CD4-positive, alpha-beta memory T cell (primary cell): ENCODE measurements at regions of chr22 and their contacts with region 1.

Region 1: GRCh38 chr22:41957941-41958556 is 6.1 kb downstream of the SMIM45 start:
- DNase-seq: no peak
- H3K4me3 ChIP-seq: no peak overlapping the region
- H3K4me3 Mint-ChIP-seq: no peak overlapping the region
- H3K27ac ChIP-seq: no peak overlapping the region
- H3K27ac Mint-ChIP-seq: peak overlapping the region in 1 of 7 donors; percentile 69
- H3K4me1 ChIP-seq: no peaks in the 10 kb centered on the region
- H3K4me1 Mint-ChIP-seq: peaks cover 3 to 5% (median 4%) of the 10 kb centered on the region in 4 donors
- H3K27me3 ChIP-seq: no peaks in the 10 kb centered on the region
- H3K27me3 Mint-ChIP-seq: peaks cover 0 to 1% of the 10 kb centered on the region in 2 donors

Region 2: DNA sequence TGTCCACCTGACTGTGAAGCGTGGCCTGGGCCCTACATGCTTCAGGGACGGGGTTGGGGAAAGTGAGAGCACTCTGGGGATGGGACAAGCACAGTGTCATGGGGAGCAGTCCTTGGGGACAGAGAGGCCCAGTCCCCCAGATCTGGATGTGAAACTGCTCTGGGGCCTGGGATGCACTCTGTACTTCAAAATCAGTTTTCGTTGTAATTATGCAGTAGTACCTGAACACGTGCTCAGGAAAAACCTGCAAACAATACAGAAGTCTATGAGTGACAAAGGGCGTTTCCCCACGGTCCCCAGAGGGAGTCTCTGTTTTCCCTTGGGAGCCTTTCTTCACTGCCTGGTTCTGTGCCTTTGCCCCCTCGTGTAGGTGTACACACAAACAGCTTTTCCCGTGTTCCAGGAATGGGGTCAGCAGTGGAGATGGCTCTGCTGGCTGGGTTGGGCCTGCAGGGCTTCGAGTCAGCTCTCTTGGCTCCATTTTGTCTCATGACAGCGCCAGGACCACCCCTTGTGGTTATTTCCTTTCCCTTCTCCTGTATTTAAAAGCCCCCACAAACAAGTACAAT is 26.3 kb before region 1 on chr22:
- CTCF ChIA-PET with region 1: interaction called, 3 read pairs
- POLR2A ChIA-PET with region 1: no interaction called
- intact Hi-C with region 1: loop called (anchors 2 kb)
- DNase-seq: no peak
- H3K4me3 ChIP-seq: no peak overlapping the region
- H3K4me3 Mint-ChIP-seq: no peak overlapping the region
- H3K27ac ChIP-seq: no peak overlapping the region
- H3K27ac Mint-ChIP-seq: peak overlapping the region in 1 of 7 donors; percentile 68
- H3K4me1 ChIP-seq: peaks cover 7% of the 10 kb centered on the region
- H3K4me1 Mint-ChIP-seq: peaks cover 2 to 22% (median 5%) of the 10 kb centered on the region in 4 donors
- H3K27me3 ChIP-seq: no peaks in the 10 kb centered on the region
- H3K27me3 Mint-ChIP-seq: no peaks in the 10 kb centered on the region

Region 3: DNA sequence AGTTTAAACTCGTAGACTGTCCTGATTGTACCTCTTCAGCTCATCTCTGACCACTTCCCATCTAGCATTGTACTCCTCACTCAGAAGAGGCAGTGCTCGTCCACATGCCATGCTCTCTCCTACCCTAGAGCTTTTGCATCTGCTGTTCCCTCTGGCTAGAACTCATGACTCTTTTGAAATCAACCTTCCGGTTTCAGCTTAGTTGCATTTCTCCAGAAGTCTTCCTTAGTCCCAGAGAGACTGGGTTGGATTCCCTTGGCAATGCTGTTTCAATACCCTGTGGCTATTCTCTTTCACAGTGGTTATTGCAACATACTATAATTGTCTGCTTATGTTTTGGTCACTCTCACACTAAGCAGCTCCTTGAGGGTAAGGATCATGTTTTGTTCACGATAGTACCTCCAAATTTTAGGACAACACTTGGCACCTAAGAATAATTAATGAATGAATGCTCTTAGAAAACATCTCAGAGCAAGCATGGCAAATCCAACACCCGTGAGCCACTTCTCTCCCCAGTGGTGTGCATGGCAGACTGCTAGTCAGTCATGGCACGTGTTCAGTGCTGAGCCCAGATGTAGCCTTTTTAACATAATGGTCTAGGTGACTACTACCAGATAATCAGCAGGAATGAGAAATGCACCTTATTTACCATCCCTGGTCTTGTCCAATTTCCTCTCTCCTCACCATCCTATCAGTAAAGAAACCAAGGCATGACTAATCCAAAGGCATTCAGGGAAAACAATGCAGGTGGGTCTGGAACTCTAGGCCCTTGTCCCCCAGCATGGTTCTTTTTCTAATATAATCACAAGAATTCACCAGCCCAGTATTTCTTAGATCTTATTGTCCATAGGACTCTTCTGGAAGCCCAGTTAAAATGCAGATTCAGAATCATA is 25.7 kb after region 1 on chr22:
- CTCF ChIA-PET with region 1: no interaction called
- POLR2A ChIA-PET with region 1: no interaction called
- intact Hi-C with region 1: no loop called
- DNase-seq: no peak
- H3K4me3 ChIP-seq: no peak overlapping the region
- H3K4me3 Mint-ChIP-seq: no peak overlapping the region
- H3K27ac ChIP-seq: no peak overlapping the region
- H3K27ac Mint-ChIP-seq: no peak overlapping the region
- H3K4me1 ChIP-seq: no peaks in the 10 kb centered on the region
- H3K4me1 Mint-ChIP-seq: no peaks in the 10 kb centered on the region
- H3K27me3 ChIP-seq: no peaks in the 10 kb centered on the region
- H3K27me3 Mint-ChIP-seq: no peaks in the 10 kb centered on the region

Region 4: GRCh38 chr22:42437488-42438292 is 479.6 kb after region 1 on chr22:
- CTCF ChIA-PET with region 1: interaction called, 6 read pairs
- POLR2A ChIA-PET with region 1: no interaction called
- intact Hi-C with region 1: loop called (anchors 2 kb)
- DNase-seq: peak; percentile 80 to 86 (median 81)
- H3K4me3 ChIP-seq: peak overlapping the region; percentile 48 to 79
- H3K4me3 Mint-ChIP-seq: peak overlapping the region; percentile 77 to 91 (median 84)
- H3K27ac ChIP-seq: peak overlapping the region; percentile 3
- H3K27ac Mint-ChIP-seq: peak overlapping the region in 5 of 7 donors; percentile 48 to 83 (median 76)
- H3K4me1 ChIP-seq: peaks cover 10% of the 10 kb centered on the region
- H3K4me1 Mint-ChIP-seq: peaks cover 4 to 17% (median 7%) of the 10 kb centered on the region in 4 donors
- H3K27me3 ChIP-seq: no peaks in the 10 kb centered on the region
- H3K27me3 Mint-ChIP-seq: peaks cover 0 to 2% of the 10 kb centered on the region in 2 donors